ENCODE measurements at regions of chr20 and their contacts with region 1.

Region 1: DNA sequence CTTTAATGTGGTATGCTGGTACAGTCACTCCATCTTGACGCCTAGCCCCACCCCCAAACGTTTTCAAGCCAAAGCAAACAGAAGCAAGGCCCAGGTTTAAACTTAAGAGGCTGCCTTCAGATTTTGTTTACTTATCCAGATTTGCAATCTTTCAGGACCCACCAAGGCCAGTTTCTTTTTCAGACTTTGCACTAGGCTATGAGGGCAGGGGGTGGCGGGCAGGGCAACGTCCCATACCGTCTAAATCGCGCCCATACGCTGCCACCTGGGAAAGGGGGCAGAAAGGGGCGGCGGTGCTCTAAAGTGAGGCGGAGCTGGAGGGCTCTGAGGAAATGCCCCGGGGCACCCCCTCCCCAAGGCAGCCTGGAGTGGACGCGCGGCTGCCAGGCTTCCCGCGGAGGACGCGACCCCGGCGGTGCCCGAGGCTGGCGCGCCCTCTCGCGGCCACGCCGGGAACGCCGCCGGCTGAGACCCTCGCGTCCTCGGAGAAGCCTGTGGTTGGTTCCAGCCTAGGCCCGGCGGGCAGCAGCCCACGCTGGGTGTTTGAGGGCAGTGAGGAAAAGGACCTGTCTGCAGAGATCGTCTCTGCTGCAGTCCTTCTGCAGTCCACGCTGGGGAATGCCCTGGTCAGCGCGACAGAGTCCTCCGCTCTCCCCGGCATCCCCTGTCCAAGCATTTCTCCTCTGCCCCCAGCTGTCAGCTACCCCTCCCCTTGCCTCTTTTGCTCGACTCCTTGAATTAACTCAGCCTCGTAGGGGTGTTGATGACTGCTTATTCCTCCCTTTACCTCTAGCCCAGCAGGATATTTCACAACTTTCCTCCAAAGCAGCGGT is 129.2 kb upstream of the PRND start:
- DNase-seq: peak; percentile 76 to 78
- ATAC-seq: peak; percentile 94 to 97
- H3K4me3 ChIP-seq: peak overlapping the region; percentile 51
- H3K27ac ChIP-seq: peak overlapping the region; percentile 91 to 93
- H3K4me1 ChIP-seq: peaks cover 15% of the 10 kb centered on the region
- CTCF ChIP-seq: peak; percentile 99
- EP300 ChIP-seq: no peak
- POLR2A ChIP-seq: no peak
- RAD21 ChIP-seq: peak; percentile 94 to 100

Region 2: GRCh38 chr20:4234128-4234527 is 358.4 kb before region 1 on chr20:
- CTCF ChIA-PET with region 1: interaction called, 19 read pairs
- POLR2A ChIA-PET with region 1: no interaction called
- DNase-seq: peak in 1 of 2 experiments; percentile 49
- ATAC-seq: peak in 1 of 2 experiments; percentile 22; a peak in 1 of 6 replicates
- H3K4me3 ChIP-seq: no peak overlapping the region
- H3K27ac ChIP-seq: no peak overlapping the region
- H3K4me1 ChIP-seq: 0 out of 3 replicates have a peak, but pooled peaks cover 4% of the 10 kb centered on the region
- CTCF ChIP-seq: no peak
- EP300 ChIP-seq: no peak
- POLR2A ChIP-seq: no peak
- RAD21 ChIP-seq: no peak

Region 3: DNA sequence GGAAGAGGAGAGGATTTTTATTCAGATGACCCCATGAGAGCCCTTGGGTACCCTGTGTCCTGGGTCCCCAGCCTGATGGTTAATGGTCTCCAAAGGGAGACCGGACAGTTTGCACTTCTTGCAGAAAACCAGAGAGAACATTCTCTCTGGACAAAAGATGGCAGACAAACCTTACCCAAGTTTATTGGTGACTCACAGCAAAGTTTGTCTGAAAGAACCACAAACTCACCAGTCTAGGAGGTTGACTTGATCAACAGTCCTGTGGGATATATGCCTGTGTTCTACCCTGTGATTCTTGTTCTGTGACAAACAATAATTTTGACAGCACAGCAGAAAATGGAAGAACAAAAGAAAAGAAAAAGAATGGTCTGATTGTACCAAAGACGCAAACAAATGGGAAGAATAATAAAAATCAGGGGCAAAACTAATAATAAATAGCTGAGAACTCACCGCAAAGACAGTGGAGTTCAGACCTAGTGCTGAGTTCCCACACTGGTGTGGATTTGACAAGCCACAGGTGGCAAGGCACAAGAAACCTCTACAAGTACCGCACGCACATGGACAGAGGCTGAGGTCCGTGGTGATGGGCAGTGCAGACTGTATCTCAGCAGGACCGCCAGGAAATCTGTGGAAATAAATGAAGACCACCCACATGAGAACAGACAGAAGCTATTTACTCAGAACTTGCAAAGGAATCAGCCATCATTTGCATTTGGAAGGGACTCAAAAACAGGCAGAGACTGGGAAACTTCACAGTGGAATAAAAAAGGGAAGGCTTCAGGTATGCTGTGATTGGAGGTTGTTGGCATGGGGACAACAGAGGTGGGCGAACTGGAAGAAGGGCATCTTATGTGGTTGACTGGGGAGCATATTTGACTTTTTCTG is 331.0 kb before region 1 on chr20:
- CTCF ChIA-PET with region 1: interaction called, 67 read pairs
- POLR2A ChIA-PET with region 1: no interaction called
- DNase-seq: no peak
- ATAC-seq: no peak
- H3K4me3 ChIP-seq: no peak overlapping the region
- H3K27ac ChIP-seq: no peak overlapping the region
- H3K4me1 ChIP-seq: no peaks in the 10 kb centered on the region
- CTCF ChIP-seq: no peak
- EP300 ChIP-seq: no peak
- POLR2A ChIP-seq: no peak
- RAD21 ChIP-seq: 0 out of 5 replicates have a peak, but pooled peaks of 1 of the 2 experiments have one; percentile 21

Region 4: GRCh38 chr20:4607287-4607713 is 14.8 kb after region 1 on chr20:
- CTCF ChIA-PET with region 1: interaction called, 17 read pairs
- POLR2A ChIA-PET with region 1: no interaction called
- DNase-seq: peak; percentile 75 to 84
- ATAC-seq: peak; percentile 69 to 92
- H3K4me3 ChIP-seq: no peak overlapping the region
- H3K27ac ChIP-seq: 0 out of 6 replicates have a peak overlapping the region, but pooled peaks of 1 of the 2 experiments have one; percentile 44
- H3K4me1 ChIP-seq: no peaks in the 10 kb centered on the region
- CTCF ChIP-seq: peak; percentile 99
- EP300 ChIP-seq: no peak
- POLR2A ChIP-seq: no peak
- RAD21 ChIP-seq: peak; percentile 99

Measured in A549 (cell line).